ENCODE measurements at regions of chr19 and their contacts with region 1.

Region 1: GRCh38 chr19:41144403-41144802 is 30.2 kb downstream of the CYP2F1 start:
- DNase-seq: peak; percentile 92
- ATAC-seq: peak; percentile 92
- H3K4me3 Mint-ChIP-seq: no peak overlapping the region
- H3K27ac Mint-ChIP-seq: no peak overlapping the region
- H3K4me1 Mint-ChIP-seq: no peaks in the 10 kb centered on the region
- H3K27me3 Mint-ChIP-seq: peaks cover 14% of the 10 kb centered on the region

Region 2: GRCh38 chr19:40974633-40975037 is 169.8 kb before region 1 on chr19:
- CTCF ChIA-PET with region 1: interaction called, 12 read pairs
- DNase-seq: peak; percentile 86
- ATAC-seq: peak; percentile 86
- H3K4me3 Mint-ChIP-seq: no peak overlapping the region
- H3K27ac Mint-ChIP-seq: no peak overlapping the region
- H3K4me1 Mint-ChIP-seq: peaks cover 39% of the 10 kb centered on the region
- H3K27me3 Mint-ChIP-seq: peaks cover 14% of the 10 kb centered on the region

Region 3: GRCh38 chr19:41000310-41000737 is 144.1 kb before region 1 on chr19:
- CTCF ChIA-PET with region 1: no interaction called
- DNase-seq: no peak
- ATAC-seq: no peak
- H3K4me3 Mint-ChIP-seq: no peak overlapping the region
- H3K27ac Mint-ChIP-seq: no peak overlapping the region
- H3K4me1 Mint-ChIP-seq: peaks cover 3% of the 10 kb centered on the region
- H3K27me3 Mint-ChIP-seq: peaks cover 14% of the 10 kb centered on the region

Region 4: GRCh38 chr19:41123716-41124294 is 20.6 kb before region 1 on chr19:
- CTCF ChIA-PET with region 1: interaction called, 10 read pairs
- DNase-seq: no peak
- ATAC-seq: no peak
- H3K4me3 Mint-ChIP-seq: no peak overlapping the region
- H3K27ac Mint-ChIP-seq: no peak overlapping the region
- H3K4me1 Mint-ChIP-seq: peaks cover 33% of the 10 kb centered on the region
- H3K27me3 Mint-ChIP-seq: peaks cover 3% of the 10 kb centered on the region

Region 5: DNA sequence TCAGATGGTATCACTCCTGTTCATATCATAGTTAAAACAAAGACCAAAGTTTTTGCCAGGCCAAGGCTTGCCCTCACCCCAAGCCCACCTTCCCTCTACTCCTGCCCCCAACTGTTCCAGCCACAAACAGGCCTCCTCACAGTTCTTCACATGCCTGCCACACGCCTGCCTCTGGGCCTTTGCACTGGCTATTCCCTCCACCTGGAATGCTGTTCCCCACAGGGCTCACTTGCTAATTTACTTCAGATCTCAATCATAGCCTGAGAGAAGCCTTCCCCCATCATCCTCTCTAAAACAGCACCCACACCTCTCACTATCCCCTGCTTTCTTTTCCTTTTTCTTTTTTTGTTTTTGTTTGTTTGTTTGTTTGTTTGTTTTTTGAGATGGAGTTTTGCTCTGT is 69.8 kb after region 1 on chr19:
- CTCF ChIA-PET with region 1: no interaction called
- DNase-seq: no peak
- ATAC-seq: no peak
- H3K4me3 Mint-ChIP-seq: no peak overlapping the region
- H3K27ac Mint-ChIP-seq: no peak overlapping the region
- H3K4me1 Mint-ChIP-seq: no peaks in the 10 kb centered on the region
- H3K27me3 Mint-ChIP-seq: peaks cover 20% of the 10 kb centered on the region

Measured in activated CD8-positive, alpha-beta memory T cell treated with anti-CD3 and anti-CD28 coated beads, Interleukin-2, amount 10 ng/mL, durations not matched to agents 7 days and 5 days (primary cell).